ENCODE measurements at regions of chr12 and their contacts with region 1.

Region 1: GRCh38 chr12:110826592-110827200 is 20.1 kb upstream of the CCDC63 start:
- DNase-seq: peak; percentile 94
- H3K4me3 Mint-ChIP-seq: no peak overlapping the region
- H3K27ac Mint-ChIP-seq: no peak overlapping the region
- H3K4me1 Mint-ChIP-seq: peaks cover 14% of the 10 kb centered on the region
- H3K27me3 Mint-ChIP-seq: peaks cover 4% of the 10 kb centered on the region

Region 2: DNA sequence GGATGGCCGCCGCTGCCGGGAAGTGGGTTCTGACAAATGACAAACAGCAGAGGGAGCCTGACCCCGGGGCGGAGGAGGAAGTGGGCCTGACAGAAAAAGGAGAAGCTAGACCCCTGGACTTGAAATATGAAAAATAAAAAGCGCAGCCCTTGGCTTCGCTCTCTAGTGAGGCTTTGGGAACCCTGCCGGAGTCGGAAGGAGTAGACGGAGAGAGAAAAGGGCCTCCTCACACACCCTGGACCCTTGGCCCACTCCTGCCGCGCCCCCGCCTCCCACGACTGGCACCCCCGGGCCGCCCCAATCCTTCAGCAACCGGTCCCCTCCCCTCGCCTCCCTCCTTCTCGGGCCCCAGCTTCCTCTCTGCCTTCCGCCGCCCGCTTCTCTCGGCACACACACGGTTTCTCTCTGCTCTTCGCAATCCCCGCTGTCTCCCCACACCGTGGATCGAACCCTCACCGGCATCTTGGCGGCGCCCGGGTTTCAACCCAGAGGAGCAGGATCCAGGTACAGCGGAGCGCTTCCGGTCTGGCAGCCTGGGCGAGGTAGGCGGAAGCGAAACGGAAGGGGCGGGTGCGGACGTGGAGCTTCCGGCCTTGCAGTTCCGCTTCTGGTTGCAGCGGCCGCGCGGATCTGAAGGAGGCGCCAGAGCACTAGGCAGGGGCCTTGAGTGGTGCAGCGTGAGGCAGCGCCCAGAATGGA is 376.7 kb before region 1 on chr12 and contains the start of gene ARPC3:
- CTCF ChIA-PET with region 1: interaction called, 3 read pairs
- POLR2A ChIA-PET with region 1: no interaction called
- intact Hi-C with region 1: loop called (anchors 1 kb)
- DNase-seq: peak; percentile 97
- H3K4me3 Mint-ChIP-seq: peak within 1 kb of the TSS; percentile 100
- H3K27ac Mint-ChIP-seq: peak within 1 kb of the TSS; percentile 99
- H3K4me1 Mint-ChIP-seq: peaks cover 35% of the 10 kb centered on the region
- H3K27me3 Mint-ChIP-seq: no peaks in the 10 kb centered on the region
- total RNA-seq, gene ARPC3: 340 to 352 TPM

Region 3: DNA sequence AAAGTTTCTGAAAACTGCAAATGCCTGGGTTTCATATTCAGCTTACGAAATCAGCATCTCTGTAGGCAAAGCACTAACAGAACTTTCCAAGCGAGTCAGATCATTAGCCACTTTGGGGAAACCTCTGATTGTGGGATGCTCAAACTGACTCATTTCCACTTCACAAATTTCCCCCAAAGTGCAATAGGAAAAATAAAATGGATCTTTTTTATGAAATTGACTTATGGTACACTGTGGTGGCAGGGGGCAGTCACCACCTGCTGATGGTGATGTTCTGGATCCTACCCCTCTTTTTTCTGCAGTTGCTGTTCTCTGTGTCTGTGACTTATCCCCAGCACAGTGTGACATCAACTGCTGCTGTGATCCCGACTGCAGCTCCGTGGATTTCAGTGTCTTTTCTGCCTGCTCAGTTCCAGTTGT is 207.2 kb before region 1 on chr12:
- CTCF ChIA-PET with region 1: interaction called, 9 read pairs
- POLR2A ChIA-PET with region 1: interaction called, 3 read pairs
- intact Hi-C with region 1: loop called (anchors 1 kb)
- DNase-seq: peak; percentile 69
- H3K4me3 Mint-ChIP-seq: no peak overlapping the region
- H3K27ac Mint-ChIP-seq: peak overlapping the region; percentile 71
- H3K4me1 Mint-ChIP-seq: peaks cover 15% of the 10 kb centered on the region
- H3K27me3 Mint-ChIP-seq: no peaks in the 10 kb centered on the region

Region 4: GRCh38 chr12:110742718-110743570 is 83.8 kb before region 1 on chr12 and contains the start of gene PPP1CC:
- CTCF ChIA-PET with region 1: interaction called, 14 read pairs
- POLR2A ChIA-PET with region 1: no interaction called
- intact Hi-C with region 1: loop called (anchors 1 kb)
- DNase-seq: peak; percentile 94
- H3K4me3 Mint-ChIP-seq: peak within 1 kb of the TSS; percentile 99
- H3K27ac Mint-ChIP-seq: peak within 1 kb of the TSS; percentile 99
- H3K4me1 Mint-ChIP-seq: peaks cover 34% of the 10 kb centered on the region
- H3K27me3 Mint-ChIP-seq: no peaks in the 10 kb centered on the region
- total RNA-seq, gene PPP1CC: 334 to 343 TPM

Region 5: DNA sequence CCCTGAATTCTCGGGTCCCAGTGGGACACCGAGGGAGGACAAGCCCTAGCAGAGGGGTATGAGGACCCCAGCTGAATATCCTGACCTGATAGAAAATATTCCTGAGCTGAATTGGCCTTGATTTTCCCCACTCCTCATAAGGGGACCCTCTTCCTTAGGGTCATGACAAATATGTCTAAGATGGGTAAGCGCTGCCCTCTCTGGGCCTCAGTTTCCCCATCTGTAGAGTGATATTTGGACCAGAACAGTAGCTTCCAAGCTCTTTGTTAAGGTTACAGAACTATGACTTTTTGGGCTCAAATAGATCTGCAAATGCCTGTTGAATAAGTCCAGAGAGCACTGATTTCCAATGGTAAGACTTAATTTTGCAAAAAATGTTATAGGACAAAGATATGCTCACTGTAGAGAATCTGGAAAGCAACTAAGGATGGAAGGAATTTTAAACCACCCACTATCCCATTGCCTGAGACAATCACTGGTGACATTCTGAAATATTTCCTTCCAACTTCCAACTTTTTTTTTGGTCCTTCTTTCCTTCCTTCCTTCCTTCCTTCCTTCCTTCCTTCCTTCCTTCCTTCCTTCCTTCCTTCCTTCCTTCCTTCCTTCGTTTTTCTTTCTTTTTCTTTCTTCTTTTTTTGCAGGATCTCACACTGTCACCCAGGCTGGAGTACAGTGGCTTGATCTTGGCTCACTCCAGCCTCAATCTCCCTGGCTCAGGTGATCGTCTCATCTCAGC is 61.7 kb after region 1 on chr12:
- CTCF ChIA-PET with region 1: interaction called, 6 read pairs
- POLR2A ChIA-PET with region 1: no interaction called
- intact Hi-C with region 1: loop called (anchors 2 kb)
- DNase-seq: no peak
- H3K4me3 Mint-ChIP-seq: no peak overlapping the region
- H3K27ac Mint-ChIP-seq: no peak overlapping the region
- H3K4me1 Mint-ChIP-seq: peaks cover 4% of the 10 kb centered on the region
- H3K27me3 Mint-ChIP-seq: peaks cover 5% of the 10 kb centered on the region